Motor neuron (in vitro differentiated cells): ENCODE measurements at regions of chr14 and their contacts with region 1.

Region 1: DNA sequence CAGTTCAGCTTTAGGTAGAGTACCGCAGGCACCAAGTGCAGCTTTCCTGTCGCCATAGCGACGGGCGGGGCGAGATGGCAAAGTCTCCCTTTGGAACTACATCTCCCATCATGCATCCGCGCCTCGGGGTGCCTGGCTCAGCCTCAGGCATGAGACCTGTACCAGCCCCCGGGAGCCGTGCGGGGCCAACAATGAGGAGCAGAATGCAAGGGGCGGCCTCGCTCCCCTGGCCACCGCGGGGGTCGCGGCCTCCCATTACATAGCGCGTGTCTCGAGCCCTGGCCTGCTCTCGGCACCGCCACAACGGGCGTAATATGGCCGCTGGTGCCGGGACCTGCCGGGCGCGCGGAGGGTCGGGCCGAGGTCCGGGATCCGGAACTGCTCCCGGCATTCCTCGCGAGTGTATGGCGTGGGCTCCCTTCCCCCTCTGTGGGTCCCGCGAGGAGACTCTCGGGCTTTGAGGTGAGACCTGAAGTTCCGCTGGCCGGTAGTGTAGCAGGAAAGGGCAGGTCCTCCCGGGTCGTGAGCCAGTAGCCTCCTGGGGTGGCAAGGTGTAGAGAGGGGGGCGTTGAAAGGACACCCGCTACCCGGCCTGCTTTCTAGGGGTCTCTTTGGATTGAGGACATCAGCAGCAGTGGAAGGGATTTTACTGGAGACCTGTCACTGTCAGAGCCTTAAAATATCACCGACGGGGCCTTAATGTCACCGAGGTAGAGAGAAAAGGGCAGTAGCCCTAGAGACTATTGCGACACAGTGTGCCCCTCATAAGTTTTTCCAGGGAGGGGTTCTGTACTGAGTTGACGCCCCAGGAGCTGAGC is at the start of gene THTPA:
- ATAC-seq: peak; percentile 75 to 83 (median 80)
- H3K4me3 ChIP-seq: peak within 1 kb of the TSS; percentile 63 to 98 (median 73)
- H3K27ac ChIP-seq: peak within 1 kb of the TSS; percentile 93 to 97
- H3K4me1 ChIP-seq: peaks cover 24 to 28% of the 10 kb centered on the region in 2 donors
- total RNA-seq, gene THTPA: 10.4 to 30.8 (median 14.9) TPM

Region 2: DNA sequence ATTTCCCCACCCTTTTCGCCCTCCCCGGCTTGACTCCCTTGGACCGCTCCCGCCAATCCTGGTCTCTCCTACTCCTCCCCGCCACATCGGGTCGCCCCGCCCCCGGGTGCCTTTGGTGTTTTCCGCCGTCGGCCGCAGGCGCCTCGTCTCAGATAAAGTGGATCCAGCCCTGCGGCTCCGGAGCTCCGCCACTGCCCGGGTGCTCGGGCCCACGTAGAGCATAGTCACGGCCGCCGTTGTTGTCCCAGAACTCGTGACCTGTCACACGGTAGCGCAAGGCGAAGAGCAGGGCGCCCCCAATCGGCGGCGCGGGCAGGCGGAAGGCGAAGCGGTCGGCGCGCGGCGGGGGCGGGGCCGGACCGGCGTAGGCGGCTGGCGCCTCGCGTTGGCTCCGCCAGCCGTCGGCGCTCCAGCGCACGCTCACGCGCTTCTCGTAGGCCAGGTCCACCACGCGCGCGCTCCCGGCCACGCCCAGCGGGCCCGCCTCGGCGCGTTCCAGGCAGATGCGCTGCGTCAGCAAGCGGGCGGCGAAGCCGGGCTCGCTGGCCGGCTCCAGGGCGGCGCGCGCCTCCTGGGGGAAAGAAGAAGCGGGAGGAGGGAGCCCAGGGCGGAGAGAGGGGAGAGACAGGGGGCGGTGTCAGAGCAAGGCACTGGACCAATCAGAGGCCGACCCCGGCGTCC is 254.7 kb before region 1 on chr14:
- in situ Hi-C with region 1: loop called in 4 of 9 experiments (anchors 25 kb)
- ATAC-seq: peak; percentile 73 to 86 (median 84)
- H3K4me3 ChIP-seq: peak overlapping the region; percentile 45 to 68 (median 62)
- H3K27ac ChIP-seq: peak overlapping the region; percentile 95 to 97
- H3K4me1 ChIP-seq: peaks cover 17 to 18% of the 10 kb centered on the region in 2 donors

Region 3: DNA sequence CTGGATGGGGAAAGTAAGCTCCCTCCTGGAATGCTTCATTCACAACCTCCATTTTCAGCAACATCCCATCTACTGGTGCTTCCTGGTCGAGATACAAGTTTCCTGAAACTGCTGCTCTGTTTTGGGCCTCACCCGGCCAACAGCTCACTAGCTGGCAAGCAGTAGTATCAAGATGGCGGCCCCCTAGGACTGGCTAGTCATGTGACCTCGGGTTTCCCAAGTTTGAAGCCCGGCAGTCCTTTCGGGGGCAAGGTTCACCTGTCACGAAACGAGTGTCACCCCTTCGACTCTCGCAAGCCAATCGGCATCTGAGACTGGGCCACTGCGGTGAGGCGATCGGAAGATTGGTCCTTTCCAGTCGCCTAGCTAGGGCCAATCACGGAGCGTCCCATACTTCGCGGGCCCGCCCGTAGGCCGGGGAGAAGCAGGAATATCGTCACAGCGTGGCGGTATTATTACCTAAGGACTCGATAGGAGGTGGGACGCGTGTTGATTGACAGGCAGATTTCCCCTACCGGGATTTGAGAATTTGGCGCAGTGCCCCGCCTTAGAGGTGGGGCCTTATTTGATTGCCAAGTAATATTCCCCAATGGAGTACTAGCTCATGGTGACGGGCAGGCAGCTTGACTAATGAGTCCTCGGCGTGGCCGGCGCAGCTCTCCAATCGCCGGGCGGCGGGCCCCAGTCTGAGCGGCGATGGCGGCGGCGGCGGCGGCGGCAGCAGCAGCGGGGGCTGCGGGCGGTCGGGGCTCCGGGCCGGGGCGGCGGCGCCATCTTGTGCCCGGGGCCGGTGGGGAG is 235.1 kb before region 1 on chr14 and contains the start of gene PABPN1:
- in situ Hi-C with region 1: loop called in 7 of 9 experiments (anchors 10 to 25 kb)
- ATAC-seq: peak; percentile 83 to 94 (median 92)
- H3K4me3 ChIP-seq: peak within 1 kb of the TSS; percentile 65 to 86 (median 72)
- H3K27ac ChIP-seq: peak within 1 kb of the TSS; percentile 91 to 97
- H3K4me1 ChIP-seq: peaks cover 16 to 17% of the 10 kb centered on the region in 2 donors
- total RNA-seq, gene PABPN1: 57.2 to 162 (median 91.9) TPM

Region 4: GRCh38 chr14:23327947-23328744 is 227.9 kb before region 1 on chr14:
- in situ Hi-C with region 1: loop called in 7 of 9 experiments (anchors 10 to 25 kb)
- ATAC-seq: peak; percentile 54 to 83 (median 70)
- H3K4me3 ChIP-seq: no peak overlapping the region
- H3K27ac ChIP-seq: no peak overlapping the region
- H3K4me1 ChIP-seq: peaks cover 1 to 3% of the 10 kb centered on the region in 2 donors

Region 5: GRCh38 chr14:23366426-23366921 is 189.6 kb before region 1 on chr14:
- in situ Hi-C with region 1: no loop called
- ATAC-seq: peak; percentile 28 to 85 (median 76)
- H3K4me3 ChIP-seq: peak overlapping the region in 4 of 5 donors; percentile 14 to 22 (median 17)
- H3K27ac ChIP-seq: peak overlapping the region in 1 of 2 donors; percentile 56
- H3K4me1 ChIP-seq: peaks cover 9 to 37% of the 10 kb centered on the region in 2 donors

Region 6: GRCh38 chr14:23483236-23483854 is 72.7 kb before region 1 on chr14:
- in situ Hi-C with region 1: loop called in 7 of 9 experiments (anchors 10 kb)
- ATAC-seq: peak; percentile 87 to 98 (median 88)
- H3K4me3 ChIP-seq: no peak overlapping the region
- H3K27ac ChIP-seq: peak overlapping the region; percentile 76 to 94
- H3K4me1 ChIP-seq: peaks cover 22 to 34% of the 10 kb centered on the region in 2 donors